H1 (cell line): ENCODE measurements at regions of chr5 and their contacts with region 1.

Region 1: DNA sequence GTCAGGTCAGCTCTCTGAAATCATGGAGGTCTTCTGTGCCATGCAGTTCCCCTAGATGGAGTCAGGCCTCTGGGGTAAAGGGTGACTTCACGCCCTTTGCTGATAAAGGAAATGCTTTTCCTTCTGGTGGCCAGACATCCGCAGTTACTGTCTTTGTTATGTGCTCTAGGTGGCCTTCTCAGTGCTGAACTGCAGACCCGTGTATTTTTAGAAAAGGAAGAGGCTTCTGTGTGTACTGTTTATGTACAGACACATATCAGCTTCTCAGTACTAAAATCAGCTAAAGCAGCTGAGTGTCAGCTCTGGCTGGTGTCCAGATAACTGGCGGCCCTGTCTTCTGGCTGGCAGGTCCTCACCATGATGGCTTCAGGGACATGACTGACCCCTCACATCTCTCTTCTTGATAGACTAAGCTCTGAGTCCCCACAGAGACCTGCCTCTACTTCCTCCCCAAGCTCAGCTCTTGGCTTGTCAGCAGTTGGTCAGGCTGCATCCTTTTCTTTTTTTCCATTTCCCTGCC is 75.3 kb downstream of the ARHGAP26 start:
- DNase-seq: no peak
- H3K4me3 ChIP-seq: no peak overlapping the region
- H3K27ac ChIP-seq: no peak overlapping the region
- H3K4me1 ChIP-seq: peaks cover 0 to 14% (median 10%) of the 10 kb centered on the region in 4 experiments; a peak in 5 of 7 replicates
- H3K27me3 ChIP-seq: no peaks in the 10 kb centered on the region
- CTCF ChIP-seq: no peak
- EP300 ChIP-seq: no peak
- POLR2A ChIP-seq: no peak
- RAD21 ChIP-seq: no peak

Region 2: GRCh38 chr5:142860270-142860669 is 14.8 kb after region 1 on chr5:
- CTCF ChIA-PET with region 1: interaction called, 12 read pairs
- POLR2A ChIA-PET with region 1: interaction called, 6 read pairs
- DNase-seq: no peak
- H3K4me3 ChIP-seq: no peak overlapping the region
- H3K27ac ChIP-seq: no peak overlapping the region
- H3K4me1 ChIP-seq: peaks cover 15 to 33% (median 20%) of the 10 kb centered on the region in 4 experiments
- H3K27me3 ChIP-seq: no peaks in the 10 kb centered on the region
- CTCF ChIP-seq: no peak
- EP300 ChIP-seq: no peak
- POLR2A ChIP-seq: no peak
- RAD21 ChIP-seq: no peak